Naive thymus-derived CD4-positive, alpha-beta T cell (primary cell): ENCODE measurements at regions of chr14 and their contacts with region 1.

Region 1: DNA sequence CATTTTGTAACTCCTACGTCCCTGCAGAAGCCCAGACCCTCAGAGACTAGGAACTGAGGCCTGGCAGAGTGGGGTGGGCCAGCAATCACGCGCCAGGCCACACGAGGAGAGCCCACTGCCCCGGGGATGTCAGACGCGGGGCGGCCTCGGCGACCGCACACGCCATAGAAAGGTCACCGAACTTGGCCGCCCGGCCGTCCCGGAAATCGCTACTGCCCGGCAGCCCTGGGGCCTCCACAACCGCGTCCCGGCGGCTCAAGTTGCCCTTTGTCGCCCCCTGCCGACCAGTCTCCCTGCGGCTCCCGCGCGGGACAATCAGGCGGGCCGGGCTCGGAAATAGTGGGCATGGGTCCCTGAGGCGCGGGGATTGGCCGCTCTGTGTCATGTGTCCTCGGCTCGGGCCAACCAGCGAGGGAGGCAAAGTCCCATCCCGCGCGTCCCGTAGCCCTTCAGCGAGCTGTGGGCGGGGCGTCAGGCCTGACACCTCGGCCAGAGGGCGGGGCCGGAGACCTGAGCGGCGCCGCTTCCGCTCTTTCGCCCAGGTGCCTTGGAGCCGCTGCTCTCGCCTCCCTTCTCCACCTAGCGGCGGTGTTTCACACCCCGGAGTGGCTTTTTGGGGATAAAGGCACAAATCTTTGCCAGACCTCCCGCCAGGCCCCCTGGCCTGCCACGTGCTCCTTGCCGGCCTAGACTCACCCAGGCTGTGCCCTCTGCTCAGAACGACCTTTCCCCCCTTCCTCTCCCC is 33.4 kb upstream of the DEGS2 start:
- DNase-seq: peak; percentile 98 to 100 (median 99)
- ATAC-seq: peak; percentile 99
- H3K4me3 ChIP-seq: peak overlapping the region; percentile 56
- H3K4me3 Mint-ChIP-seq: peak overlapping the region; percentile 25 to 80 (median 60)
- H3K27ac ChIP-seq: peak overlapping the region; percentile 74
- H3K27ac Mint-ChIP-seq: peak overlapping the region; percentile 84 to 95 (median 93)
- H3K4me1 ChIP-seq: peaks cover 6 to 13% of the 10 kb centered on the region in 2 donors
- H3K4me1 Mint-ChIP-seq: peaks cover 5 to 18% (median 15%) of the 10 kb centered on the region in 7 donors
- H3K27me3 ChIP-seq: no peaks in the 10 kb centered on the region
- H3K27me3 Mint-ChIP-seq: no peaks in the 10 kb centered on the region

Region 2: DNA sequence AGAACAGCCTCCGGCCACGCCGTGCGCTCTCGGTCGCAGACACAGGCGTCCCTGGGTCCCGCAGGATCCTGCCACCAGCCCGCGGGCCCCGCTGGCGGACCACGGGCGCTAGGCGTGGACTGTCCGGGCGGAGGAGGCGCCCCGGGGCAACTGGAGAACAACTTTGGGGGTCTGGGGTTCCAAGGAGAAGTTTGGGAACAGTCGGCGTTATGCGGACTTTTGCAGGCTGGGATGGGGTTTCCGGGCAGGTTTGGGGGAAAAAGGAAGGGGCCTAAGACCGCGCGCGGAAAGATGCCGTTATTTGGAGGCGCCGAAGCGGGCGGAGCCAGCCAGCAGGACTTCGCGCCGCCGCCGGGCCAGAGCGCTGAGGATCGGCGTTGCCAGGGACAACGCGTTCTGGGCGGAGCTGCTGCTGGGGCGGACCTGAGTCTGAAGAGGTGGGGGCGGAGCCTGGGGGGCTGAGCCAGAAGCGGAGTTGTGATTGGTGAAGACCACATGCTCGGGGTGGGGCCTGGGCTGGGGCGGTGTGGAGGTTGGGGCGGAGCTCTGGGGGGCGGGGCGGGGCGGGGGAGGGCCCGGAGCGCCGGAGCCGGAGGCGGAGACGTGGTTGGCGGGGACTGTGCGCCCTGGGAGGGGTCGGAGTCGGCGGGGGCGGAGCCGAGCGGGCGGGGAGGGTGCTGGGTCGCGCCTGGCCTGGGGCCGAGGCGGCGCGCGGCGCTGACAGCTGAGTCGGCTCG is 509.1 kb before region 1 on chr14 and contains the start of gene CYP46A1:
- CTCF ChIA-PET with region 1: no interaction called
- POLR2A ChIA-PET with region 1: no interaction called
- intact Hi-C with region 1: loop called in 1 of 2 experiments (anchors 1 kb)
- DNase-seq: peak; percentile 97 to 99 (median 99)
- ATAC-seq: peak; percentile 98
- H3K4me3 ChIP-seq: peak within 1 kb of the TSS; percentile 93
- H3K4me3 Mint-ChIP-seq: peak within 1 kb of the TSS; percentile 79 to 96 (median 92)
- H3K27ac ChIP-seq: peak within 1 kb of the TSS; percentile 75
- H3K27ac Mint-ChIP-seq: peak within 1 kb of the TSS; percentile 52 to 94 (median 83)
- H3K4me1 ChIP-seq: peaks cover 5 to 12% of the 10 kb centered on the region in 2 donors
- H3K4me1 Mint-ChIP-seq: peaks cover 2 to 29% (median 11%) of the 10 kb centered on the region in 7 donors
- H3K27me3 ChIP-seq: no peaks in the 10 kb centered on the region
- H3K27me3 Mint-ChIP-seq: peaks cover 2 to 34% (median 32%) of the 10 kb centered on the region in 5 donors
- total RNA-seq, gene CYP46A1: 0.13 to 0.34 (median 0.32) TPM in 4 of 5 experiments, not detected in the other

Region 3: DNA sequence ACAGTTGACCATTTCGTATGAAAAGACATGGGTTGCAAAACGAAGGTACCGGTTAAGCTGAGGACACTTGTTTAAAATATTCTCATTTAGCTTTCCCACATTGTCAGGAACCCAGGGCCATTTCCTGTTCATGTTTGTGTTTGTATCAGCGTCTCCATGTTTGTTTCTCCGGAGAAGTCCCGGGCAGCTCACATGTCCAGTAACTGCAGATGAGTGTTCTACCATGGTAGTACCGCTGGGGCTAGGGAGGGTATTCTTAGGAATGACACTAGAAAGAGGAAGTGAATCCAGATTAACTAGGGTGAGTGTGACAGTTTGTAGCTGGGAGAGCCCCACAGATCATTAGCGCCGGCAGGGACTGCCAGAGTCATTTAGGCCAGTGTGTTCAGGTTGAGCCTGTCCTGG is 177.6 kb before region 1 on chr14:
- CTCF ChIA-PET with region 1: no interaction called
- POLR2A ChIA-PET with region 1: no interaction called
- intact Hi-C with region 1: no loop called
- DNase-seq: no peak
- ATAC-seq: no peak
- H3K4me3 ChIP-seq: no peak overlapping the region
- H3K4me3 Mint-ChIP-seq: no peak overlapping the region
- H3K27ac ChIP-seq: no peak overlapping the region
- H3K27ac Mint-ChIP-seq: no peak overlapping the region
- H3K4me1 ChIP-seq: peaks cover 0 to 5% of the 10 kb centered on the region in 2 donors
- H3K4me1 Mint-ChIP-seq: peaks cover 0 to 6% (median 0%) of the 10 kb centered on the region in 7 donors
- H3K27me3 ChIP-seq: no peaks in the 10 kb centered on the region
- H3K27me3 Mint-ChIP-seq: peaks cover 0 to 4% (median 0%) of the 10 kb centered on the region in 5 donors

Region 4: GRCh38 chr14:100056964-100057795 is 135.7 kb before region 1 on chr14:
- CTCF ChIA-PET with region 1: interaction called, 17 read pairs
- POLR2A ChIA-PET with region 1: interaction called, 4 read pairs
- intact Hi-C with region 1: loop called (anchors 1 kb)
- DNase-seq: peak in 7 of 9 donors; percentile 62 to 76 (median 67)
- ATAC-seq: peak; percentile 83
- H3K4me3 ChIP-seq: no peak overlapping the region
- H3K4me3 Mint-ChIP-seq: peak overlapping the region; percentile 35 to 79 (median 72)
- H3K27ac ChIP-seq: peak overlapping the region; percentile 33
- H3K27ac Mint-ChIP-seq: peak overlapping the region; percentile 83 to 96 (median 94)
- H3K4me1 ChIP-seq: peaks cover 49% of the 10 kb centered on the region in 2 donors
- H3K4me1 Mint-ChIP-seq: peaks cover 37 to 70% (median 60%) of the 10 kb centered on the region in 7 donors
- H3K27me3 ChIP-seq: no peaks in the 10 kb centered on the region
- H3K27me3 Mint-ChIP-seq: no peaks in the 10 kb centered on the region

Region 5: DNA sequence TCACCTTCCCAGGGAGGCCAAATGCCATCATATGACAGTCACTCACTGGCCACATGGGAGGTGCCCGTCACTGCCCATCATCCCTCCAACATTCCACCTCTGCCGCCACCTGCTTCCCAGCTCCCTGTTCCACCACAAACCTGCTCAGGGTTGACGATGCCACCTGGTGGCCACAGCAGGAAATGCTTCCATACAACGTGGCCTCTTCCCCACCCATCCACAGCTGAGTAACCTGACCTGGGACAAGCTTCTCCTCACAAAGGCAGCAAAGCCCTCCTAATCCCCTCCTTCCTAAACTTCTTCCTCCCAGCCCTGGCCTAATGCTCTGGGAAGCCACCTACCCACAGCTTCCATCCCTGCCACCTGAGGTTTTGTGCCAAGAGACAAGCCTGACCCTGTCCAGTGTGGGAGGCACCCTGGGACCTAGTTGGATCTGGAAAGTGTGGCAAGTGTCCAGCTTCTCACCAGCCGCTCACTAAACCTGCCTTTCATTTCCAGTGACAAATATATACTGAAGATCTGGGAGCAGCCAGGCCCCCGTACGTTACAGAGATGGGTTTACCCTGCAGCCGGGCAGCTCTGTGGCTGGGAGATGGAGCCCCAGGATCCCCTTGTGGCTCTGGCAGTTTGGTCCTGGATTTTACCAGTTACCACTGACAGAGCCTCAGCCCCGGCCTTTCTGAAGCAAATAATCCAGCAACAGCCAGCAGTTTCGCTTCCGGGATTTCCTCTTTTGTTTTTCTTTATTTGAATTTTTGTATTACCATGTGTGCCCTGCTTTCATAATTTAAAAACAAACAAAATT is 37.6 kb before region 1 on chr14:
- CTCF ChIA-PET with region 1: interaction called, 4 read pairs
- POLR2A ChIA-PET with region 1: no interaction called
- intact Hi-C with region 1: loop called (anchors 2 kb)
- DNase-seq: no peak
- ATAC-seq: no peak
- H3K4me3 ChIP-seq: no peak overlapping the region
- H3K4me3 Mint-ChIP-seq: peak overlapping the region in 2 of 10 donors; percentile 13 to 18
- H3K27ac ChIP-seq: no peak overlapping the region
- H3K27ac Mint-ChIP-seq: peak overlapping the region in 4 of 9 donors; percentile 17 to 54 (median 42)
- H3K4me1 ChIP-seq: no peaks in the 10 kb centered on the region
- H3K4me1 Mint-ChIP-seq: peaks cover 0 to 6% (median 2%) of the 10 kb centered on the region in 7 donors
- H3K27me3 ChIP-seq: no peaks in the 10 kb centered on the region
- H3K27me3 Mint-ChIP-seq: peaks cover 4 to 35% (median 7%) of the 10 kb centered on the region in 5 donors

Region 6: GRCh38 chr14:100234511-100234910 is 41.7 kb after region 1 on chr14:
- CTCF ChIA-PET with region 1: interaction called, 11 read pairs
- POLR2A ChIA-PET with region 1: interaction called, 7 read pairs
- intact Hi-C with region 1: loop called in 1 of 2 experiments (anchors 1 kb)
- DNase-seq: peak in 7 of 9 donors; percentile 29 to 69 (median 54)
- ATAC-seq: no peak
- H3K4me3 ChIP-seq: no peak overlapping the region
- H3K4me3 Mint-ChIP-seq: peak overlapping the region; percentile 13 to 98 (median 44)
- H3K27ac ChIP-seq: peak overlapping the region; percentile 59
- H3K27ac Mint-ChIP-seq: peak overlapping the region; percentile 44 to 99 (median 87)
- H3K4me1 ChIP-seq: peaks cover 18 to 25% of the 10 kb centered on the region in 2 donors
- H3K4me1 Mint-ChIP-seq: peaks cover 38 to 71% (median 62%) of the 10 kb centered on the region in 7 donors
- H3K27me3 ChIP-seq: no peaks in the 10 kb centered on the region
- H3K27me3 Mint-ChIP-seq: peaks cover 0 to 2% (median 0%) of the 10 kb centered on the region in 5 donors

Region 7: DNA sequence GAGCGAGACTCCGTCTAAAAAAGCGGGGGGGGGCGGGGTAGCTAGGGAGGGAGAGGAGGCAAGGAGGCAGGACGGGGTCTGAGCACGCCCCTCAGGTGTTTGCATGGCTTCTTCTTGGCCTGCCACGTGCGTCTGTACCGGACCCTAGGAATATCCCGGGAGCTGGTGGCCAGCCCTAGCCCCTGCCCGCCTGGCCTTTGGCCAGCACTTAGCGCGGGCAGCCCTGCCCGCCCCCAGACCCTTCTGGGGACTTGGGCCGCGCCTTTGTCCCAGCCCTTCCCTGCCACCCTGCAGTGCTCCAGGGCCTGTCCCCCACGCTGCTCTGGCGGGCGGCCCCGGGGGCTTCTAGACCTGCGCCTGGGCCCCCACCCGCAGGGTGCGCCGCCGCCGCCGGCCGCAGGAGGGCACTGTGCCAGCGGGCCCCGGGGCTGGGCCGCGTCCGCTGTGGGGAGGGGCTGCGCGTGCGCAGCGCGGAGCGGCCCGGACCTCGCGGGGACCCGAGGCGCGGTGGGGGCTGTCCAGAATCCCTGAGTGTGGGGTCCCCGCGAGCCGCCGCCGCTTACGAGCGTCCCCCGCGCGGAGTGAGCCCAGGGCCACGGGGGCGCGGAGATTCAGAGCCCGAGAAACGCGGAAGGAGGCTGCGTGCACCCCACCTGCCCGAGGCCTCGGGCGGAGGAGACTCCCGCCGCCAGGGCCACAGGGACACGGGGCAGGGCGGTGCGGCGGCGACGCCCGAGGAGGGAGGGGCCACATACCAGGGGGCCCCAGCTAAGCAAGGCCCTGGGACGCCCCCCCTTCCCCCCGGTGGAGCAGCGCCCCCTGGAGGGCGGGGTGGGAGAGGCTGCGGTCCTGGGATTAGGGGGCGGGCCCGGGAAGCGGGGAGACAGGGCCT is 92.4 kb after region 1 on chr14:
- CTCF ChIA-PET with region 1: interaction called, 4 read pairs
- POLR2A ChIA-PET with region 1: no interaction called
- intact Hi-C with region 1: loop called in 1 of 2 experiments (anchors 1 kb)
- DNase-seq: peak; percentile 71 to 92 (median 79)
- ATAC-seq: peak; percentile 97
- H3K4me3 ChIP-seq: peak overlapping the region; percentile 71
- H3K4me3 Mint-ChIP-seq: peak overlapping the region; percentile 27 to 91 (median 73)
- H3K27ac ChIP-seq: peak overlapping the region; percentile 85
- H3K27ac Mint-ChIP-seq: peak overlapping the region in 5 of 9 donors; percentile 9 to 87 (median 59)
- H3K4me1 ChIP-seq: peaks cover 0 to 6% of the 10 kb centered on the region in 2 donors
- H3K4me1 Mint-ChIP-seq: peaks cover 2 to 21% (median 8%) of the 10 kb centered on the region in 7 donors
- H3K27me3 ChIP-seq: no peaks in the 10 kb centered on the region
- H3K27me3 Mint-ChIP-seq: no peaks in the 10 kb centered on the region